ENCODE measurements at regions of chr2 and their contacts with region 1.

Region 1: DNA sequence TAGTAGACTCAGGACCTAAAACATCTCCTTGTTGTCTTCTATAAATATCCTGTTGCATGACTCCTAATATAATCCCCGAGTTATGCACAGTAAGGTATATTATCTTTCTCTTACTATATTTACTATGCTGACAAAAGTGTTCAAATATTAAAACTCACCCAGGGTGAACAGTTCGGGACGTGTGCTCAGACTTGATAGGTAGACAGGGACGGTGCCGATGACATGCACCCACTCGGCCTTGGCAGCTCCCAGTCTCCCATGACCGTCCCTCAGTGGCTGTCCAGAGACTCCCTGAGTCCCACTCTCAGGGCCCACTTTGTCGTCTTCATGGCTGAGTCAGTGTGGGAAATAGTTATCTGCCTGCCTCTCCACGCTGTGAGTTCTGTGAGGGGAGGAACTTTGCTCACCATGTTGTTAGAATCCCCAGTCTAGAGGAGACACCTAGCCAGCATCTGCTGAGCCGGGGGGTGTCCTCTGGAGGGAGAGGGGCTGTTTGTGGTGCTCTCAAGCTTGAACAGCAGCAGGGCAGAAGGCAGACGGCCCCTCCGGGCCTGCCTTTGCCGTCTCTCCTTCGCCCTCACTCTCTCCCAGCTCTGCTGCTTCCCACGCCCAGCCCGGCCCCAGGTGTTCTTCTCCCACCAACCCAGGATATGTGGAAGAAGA is 75.0 kb downstream of the DGKD start:
- DNase-seq: no peak
- ATAC-seq: no peak
- H3K4me3 ChIP-seq: no peak overlapping the region
- H3K27ac ChIP-seq: no peak overlapping the region
- H3K4me1 ChIP-seq: no peaks in the 10 kb centered on the region
- H3K27me3 ChIP-seq: no peaks in the 10 kb centered on the region
- CTCF ChIP-seq: no peak
- EP300 ChIP-seq: no peak
- POLR2A ChIP-seq: no peak
- RAD21 ChIP-seq: no peak

Region 2: GRCh38 chr2:233418761-233419625 is 10.3 kb before region 1 on chr2:
- CTCF ChIA-PET with region 1: interaction called, 3 read pairs
- POLR2A ChIA-PET with region 1: no interaction called
- RAD21 ChIA-PET with region 1: interaction called, 5 read pairs
- SMC1A ChIA-PET with region 1: interaction called, 10 read pairs
- in situ Hi-C with region 1: no loop called
- intact Hi-C with region 1: no loop called
- DNase-seq: peak; percentile 62
- ATAC-seq: peak; percentile 81
- H3K4me3 ChIP-seq: peak overlapping the region; percentile 74
- H3K27ac ChIP-seq: peak overlapping the region; percentile 95
- H3K4me1 ChIP-seq: peaks cover 68% of the 10 kb centered on the region
- H3K27me3 ChIP-seq: no peaks in the 10 kb centered on the region
- CTCF ChIP-seq: no peak
- EP300 ChIP-seq: peak in 1 of 2 experiments; percentile 66; a peak in 1 of 4 replicates
- POLR2A ChIP-seq: 0 out of 2 replicates have a peak, but pooled peaks have one; percentile 15
- RAD21 ChIP-seq: no peak